Activated naive CD4-positive, alpha-beta T cell treated with anti-CD3 and anti-CD28 coated beads for 36 hours (primary cell): ENCODE measurements at regions of chr11 and their contacts with region 1.

Region 1: DNA sequence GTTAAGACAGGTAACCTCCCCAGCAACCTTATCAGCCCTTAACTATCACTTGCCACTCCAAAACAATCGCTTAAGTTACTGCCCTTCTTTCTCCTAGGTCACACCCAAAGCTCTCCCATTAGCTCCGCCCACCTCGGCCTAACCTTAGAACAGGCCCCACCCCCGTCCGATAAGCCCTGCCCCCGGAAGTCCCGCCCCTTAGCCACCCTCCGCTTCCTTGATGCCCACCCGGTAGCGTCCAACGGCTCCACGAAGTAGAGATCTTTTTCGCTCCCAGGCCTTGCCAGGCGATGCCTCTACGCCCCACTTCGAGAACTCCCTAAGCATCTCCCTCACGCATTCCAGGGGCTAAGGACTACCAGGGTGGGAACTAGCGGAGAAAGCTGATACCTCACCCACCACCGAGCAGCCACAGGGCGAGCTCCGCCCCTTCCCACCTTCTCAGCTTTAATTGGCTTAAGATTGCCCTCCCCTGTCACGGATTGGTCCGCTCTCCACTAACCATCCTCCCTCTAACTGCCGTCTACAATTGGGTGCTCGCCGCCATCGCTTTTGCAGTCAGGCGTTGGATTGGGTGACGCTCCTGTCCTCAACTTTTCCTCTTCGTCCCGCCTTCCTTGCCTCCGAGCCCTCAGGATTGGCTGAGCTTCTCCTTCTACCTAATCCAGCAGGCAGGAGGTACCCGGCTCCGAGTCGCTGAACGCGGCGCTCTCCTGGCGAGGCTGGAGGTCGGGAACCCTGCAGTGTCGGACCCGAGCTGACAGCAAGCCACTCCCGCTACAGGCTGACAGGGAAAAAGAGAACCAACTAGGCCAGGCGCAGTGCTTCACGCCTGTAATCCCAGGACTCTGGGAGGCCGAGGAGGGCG is at the start of gene ZBTB3:
- DNase-seq: peak; percentile 99
- H3K4me3 Mint-ChIP-seq: peak within 1 kb of the TSS; percentile 98
- H3K27ac Mint-ChIP-seq: peak within 1 kb of the TSS; percentile 96
- H3K4me1 Mint-ChIP-seq: peaks cover 34% of the 10 kb centered on the region
- H3K27me3 Mint-ChIP-seq: no peaks in the 10 kb centered on the region
- total RNA-seq, gene ZBTB3: 12.1 to 13.5 TPM

Region 2: GRCh38 chr11:62771144-62772021 is 17.4 kb after region 1 on chr11 and contains the start of gene TAF6L:
- CTCF ChIA-PET with region 1: interaction called, 18 read pairs
- intact Hi-C with region 1: loop called (anchors 1 kb)
- DNase-seq: peak; percentile 95
- H3K4me3 Mint-ChIP-seq: peak within 1 kb of the TSS; percentile 80
- H3K27ac Mint-ChIP-seq: peak within 1 kb of the TSS; percentile 91
- H3K4me1 Mint-ChIP-seq: peaks cover 25% of the 10 kb centered on the region
- H3K27me3 Mint-ChIP-seq: no peaks in the 10 kb centered on the region
- total RNA-seq, gene TAF6L: 8.9 to 10.5 TPM